ENCODE measurements at regions of chr5 and their contacts with region 1.

Region 1: DNA sequence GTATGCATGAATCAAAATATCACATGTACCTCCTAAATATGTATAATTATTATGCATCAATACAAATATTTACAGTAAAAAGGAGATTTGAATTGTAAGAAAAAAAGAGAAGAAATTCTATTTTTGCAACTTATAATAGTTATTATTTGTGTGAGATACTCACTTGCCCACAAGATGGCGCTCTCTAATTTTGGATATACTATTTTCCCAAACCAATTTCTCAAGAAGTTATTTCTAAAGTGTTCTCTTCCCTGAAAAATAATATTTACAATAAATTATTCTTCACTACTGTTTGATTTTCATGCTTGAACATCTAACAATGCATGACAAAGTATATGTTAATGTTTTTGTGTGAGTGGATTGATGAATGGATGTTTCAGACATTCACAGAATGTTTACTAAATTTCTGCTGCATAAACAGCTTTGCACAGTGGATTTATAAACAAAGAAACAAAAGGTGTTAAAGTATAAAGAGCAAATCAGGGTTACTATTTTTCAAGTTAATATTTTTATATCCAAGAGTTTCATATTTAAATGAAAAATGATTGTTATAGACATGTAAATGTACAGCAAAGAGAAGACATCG is 503.4 kb downstream of the PDE4D start:
- DNase-seq: peak in 3 of 9 donors; percentile 5 to 29 (median 16)
- ATAC-seq: no peak
- H3K4me3 ChIP-seq: no peak overlapping the region
- H3K4me3 Mint-ChIP-seq: no peak overlapping the region
- H3K27ac ChIP-seq: no peak overlapping the region
- H3K27ac Mint-ChIP-seq: no peak overlapping the region
- H3K4me1 ChIP-seq: no peaks in the 10 kb centered on the region
- H3K4me1 Mint-ChIP-seq: no peaks in the 10 kb centered on the region
- H3K27me3 ChIP-seq: no peaks in the 10 kb centered on the region
- H3K27me3 Mint-ChIP-seq: peaks cover 8 to 29% (median 20%) of the 10 kb centered on the region in 5 donors

Region 2: DNA sequence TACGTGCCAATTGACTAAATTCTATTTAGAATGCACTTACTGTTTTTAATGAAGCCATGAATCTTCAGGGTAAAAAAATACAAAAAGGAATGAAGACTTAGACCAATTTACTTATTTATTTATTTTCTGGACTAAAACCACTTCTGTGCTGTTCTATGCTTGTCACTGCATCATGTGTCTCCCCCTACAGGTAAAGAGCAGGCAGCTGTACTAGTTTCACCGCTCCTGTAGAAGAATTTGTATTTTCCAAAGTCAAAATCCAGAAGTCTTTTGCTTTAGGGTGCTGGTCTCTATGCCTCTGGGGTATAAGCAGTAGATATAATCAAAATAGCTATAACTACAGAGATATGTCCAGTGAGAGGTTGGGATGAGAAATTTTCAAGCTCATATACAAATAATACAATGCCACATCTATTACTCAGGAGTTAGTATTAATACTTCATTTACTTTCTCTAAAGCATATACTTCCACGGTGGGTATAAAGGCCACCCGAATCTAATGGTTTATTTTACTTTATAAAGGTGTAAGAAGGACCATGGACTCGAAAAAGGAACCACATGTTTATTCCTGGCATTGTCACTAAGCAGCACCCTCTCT is 215.8 kb before region 1 on chr5:
- CTCF ChIA-PET with region 1: no interaction called
- POLR2A ChIA-PET with region 1: no interaction called
- intact Hi-C with region 1: no loop called
- DNase-seq: peak in 7 of 9 donors; percentile 35 to 67 (median 54)
- ATAC-seq: peak; percentile 86
- H3K4me3 ChIP-seq: no peak overlapping the region
- H3K4me3 Mint-ChIP-seq: no peak overlapping the region
- H3K27ac ChIP-seq: no peak overlapping the region
- H3K27ac Mint-ChIP-seq: peak overlapping the region in 1 of 9 donors; percentile 5
- H3K4me1 ChIP-seq: no peaks in the 10 kb centered on the region
- H3K4me1 Mint-ChIP-seq: peaks cover 0 to 48% (median 5%) of the 10 kb centered on the region in 7 donors
- H3K27me3 ChIP-seq: no peaks in the 10 kb centered on the region
- H3K27me3 Mint-ChIP-seq: no peaks in the 10 kb centered on the region

Region 3: DNA sequence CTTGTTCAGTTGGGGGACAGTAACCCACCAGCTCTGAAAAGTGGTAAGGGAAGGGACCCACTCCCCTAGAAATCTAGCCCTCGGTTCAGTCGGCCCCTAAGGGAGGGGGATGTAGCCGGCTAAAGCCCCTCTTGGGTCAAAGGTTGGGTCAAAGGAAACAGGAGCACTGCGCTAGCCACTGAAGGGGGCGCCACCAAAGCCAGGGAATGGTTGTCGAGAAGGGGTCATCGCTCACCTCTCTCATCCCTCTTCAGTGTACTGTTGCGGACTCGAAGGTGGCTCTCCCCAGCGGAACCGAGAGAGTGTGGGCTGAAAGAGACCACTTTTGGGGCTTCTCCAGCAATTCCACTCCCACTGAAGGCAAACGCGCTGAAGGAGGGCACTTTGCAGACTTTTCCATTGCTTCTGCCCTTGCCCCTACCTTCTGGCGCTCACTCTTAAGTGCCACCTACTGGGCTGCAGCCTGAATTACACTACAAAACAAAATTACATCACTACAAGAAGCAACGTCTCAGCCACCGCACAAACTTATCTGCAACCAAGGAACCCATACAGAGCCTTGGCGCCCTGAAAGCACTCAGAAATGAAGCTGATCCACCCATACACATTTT is 106.5 kb after region 1 on chr5:
- CTCF ChIA-PET with region 1: no interaction called
- POLR2A ChIA-PET with region 1: no interaction called
- intact Hi-C with region 1: loop called in 1 of 2 experiments (anchors 5 kb)
- DNase-seq: no peak
- ATAC-seq: no peak
- H3K4me3 ChIP-seq: no peak overlapping the region
- H3K4me3 Mint-ChIP-seq: no peak overlapping the region
- H3K27ac ChIP-seq: no peak overlapping the region
- H3K27ac Mint-ChIP-seq: no peak overlapping the region
- H3K4me1 ChIP-seq: no peaks in the 10 kb centered on the region
- H3K4me1 Mint-ChIP-seq: no peaks in the 10 kb centered on the region
- H3K27me3 ChIP-seq: no peaks in the 10 kb centered on the region
- H3K27me3 Mint-ChIP-seq: peaks cover 0 to 35% (median 8%) of the 10 kb centered on the region in 5 donors

Region 4: GRCh38 chr5:59673438-59674058 is 283.4 kb after region 1 on chr5:
- CTCF ChIA-PET with region 1: no interaction called
- POLR2A ChIA-PET with region 1: no interaction called
- intact Hi-C with region 1: loop called (anchors 1 kb)
- DNase-seq: peak in 5 of 9 donors; percentile 17 to 43 (median 27)
- ATAC-seq: peak; percentile 45
- H3K4me3 ChIP-seq: no peak overlapping the region
- H3K4me3 Mint-ChIP-seq: no peak overlapping the region
- H3K27ac ChIP-seq: no peak overlapping the region
- H3K27ac Mint-ChIP-seq: no peak overlapping the region
- H3K4me1 ChIP-seq: no peaks in the 10 kb centered on the region
- H3K4me1 Mint-ChIP-seq: peaks cover 0 to 5% (median 0%) of the 10 kb centered on the region in 7 donors
- H3K27me3 ChIP-seq: no peaks in the 10 kb centered on the region
- H3K27me3 Mint-ChIP-seq: peaks cover under 1 to 20% (median 6%) of the 10 kb centered on the region in 5 donors

Region 5: GRCh38 chr5:59724482-59725391 is 334.6 kb after region 1 on chr5:
- CTCF ChIA-PET with region 1: no interaction called
- POLR2A ChIA-PET with region 1: no interaction called
- intact Hi-C with region 1: loop called in 1 of 2 experiments (anchors 1 kb)
- DNase-seq: peak in 2 of 9 donors; percentile 4 to 27
- ATAC-seq: peak; percentile 46
- H3K4me3 ChIP-seq: no peak overlapping the region
- H3K4me3 Mint-ChIP-seq: no peak overlapping the region
- H3K27ac ChIP-seq: no peak overlapping the region
- H3K27ac Mint-ChIP-seq: no peak overlapping the region
- H3K4me1 ChIP-seq: no peaks in the 10 kb centered on the region
- H3K4me1 Mint-ChIP-seq: no peaks in the 10 kb centered on the region
- H3K27me3 ChIP-seq: no peaks in the 10 kb centered on the region
- H3K27me3 Mint-ChIP-seq: peaks cover 0 to 9% (median 7%) of the 10 kb centered on the region in 5 donors

Region 6: GRCh38 chr5:59988396-59988795 is 598.2 kb after region 1 on chr5:
- CTCF ChIA-PET with region 1: no interaction called
- POLR2A ChIA-PET with region 1: no interaction called
- intact Hi-C with region 1: no loop called
- DNase-seq: no peak
- ATAC-seq: no peak
- H3K4me3 ChIP-seq: no peak overlapping the region
- H3K4me3 Mint-ChIP-seq: no peak overlapping the region
- H3K27ac ChIP-seq: no peak overlapping the region
- H3K27ac Mint-ChIP-seq: no peak overlapping the region
- H3K4me1 ChIP-seq: no peaks in the 10 kb centered on the region
- H3K4me1 Mint-ChIP-seq: no peaks in the 10 kb centered on the region
- H3K27me3 ChIP-seq: no peaks in the 10 kb centered on the region
- H3K27me3 Mint-ChIP-seq: no peaks in the 10 kb centered on the region

Measured in naive thymus-derived CD4-positive, alpha-beta T cell (primary cell).